Ovary (tissue), 10 donors: ENCODE measurements at regions of chr22 and their contacts with region 1.

Region 1: GRCh38 chr22:45577746-45578523 is 75.3 kb downstream of the FBLN1 start:
- DNase-seq: peak; percentile 71 to 89 (median 86)
- H3K4me3 ChIP-seq: no peak overlapping the region
- H3K27ac ChIP-seq: no peak overlapping the region
- H3K4me1 ChIP-seq: no peaks in the 10 kb centered on the region
- H3K27me3 ChIP-seq: no peaks in the 10 kb centered on the region
- CTCF ChIP-seq: peak; percentile 78 to 82 (median 80)
- EP300 ChIP-seq: no peak
- POLR2A ChIP-seq: no peak

Region 2: GRCh38 chr22:45553351-45554039 is 24.4 kb before region 1 on chr22:
- intact Hi-C with region 1: no loop called
- DNase-seq: peak; percentile 87 to 94 (median 91)
- H3K4me3 ChIP-seq: no peak overlapping the region
- H3K27ac ChIP-seq: peak overlapping the region; percentile 62 to 84
- H3K4me1 ChIP-seq: peaks cover 42% of the 10 kb centered on the region
- H3K27me3 ChIP-seq: no peaks in the 10 kb centered on the region
- CTCF ChIP-seq: peak; percentile 88 to 99 (median 97)
- EP300 ChIP-seq: no peak
- POLR2A ChIP-seq: peak; percentile 31

Region 3: GRCh38 chr22:45638834-45639746 is 61.2 kb after region 1 on chr22:
- intact Hi-C with region 1: loop called in 1 of 4 experiments (anchors 10 kb)
- DNase-seq: peak in 1 of 5 donors; percentile 40
- H3K4me3 ChIP-seq: no peak overlapping the region
- H3K27ac ChIP-seq: no peak overlapping the region
- H3K4me1 ChIP-seq: no peaks in the 10 kb centered on the region
- H3K27me3 ChIP-seq: no peaks in the 10 kb centered on the region
- CTCF ChIP-seq: no peak
- EP300 ChIP-seq: no peak
- POLR2A ChIP-seq: no peak

Region 4: DNA sequence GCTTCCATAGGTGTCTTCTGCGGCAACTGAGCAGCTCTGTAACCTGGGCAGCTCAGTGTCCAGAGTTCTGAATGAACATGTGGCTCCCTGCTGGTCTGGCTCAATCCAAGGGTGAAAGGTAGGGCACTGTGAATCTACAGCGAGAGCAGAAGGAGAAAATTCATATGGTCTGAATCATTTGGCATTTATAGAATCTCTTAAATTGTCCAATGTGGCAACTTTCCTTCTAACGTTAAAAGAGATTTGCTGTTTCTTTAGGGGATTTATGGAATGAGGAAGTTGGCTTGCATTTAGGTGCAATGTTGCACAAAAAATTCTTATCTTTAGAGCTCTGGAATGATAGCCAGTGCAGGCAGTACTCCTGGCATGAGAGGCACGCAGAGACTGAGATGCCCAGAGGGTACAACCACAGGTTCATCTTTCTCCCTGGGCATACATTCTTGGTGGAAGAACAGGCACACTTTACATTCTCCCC is 110.7 kb after region 1 on chr22:
- intact Hi-C with region 1: no loop called
- DNase-seq: no peak
- H3K4me3 ChIP-seq: no peak overlapping the region
- H3K27ac ChIP-seq: no peak overlapping the region
- H3K4me1 ChIP-seq: peaks cover 14% of the 10 kb centered on the region
- H3K27me3 ChIP-seq: no peaks in the 10 kb centered on the region
- CTCF ChIP-seq: no peak
- EP300 ChIP-seq: no peak
- POLR2A ChIP-seq: no peak

Region 5: DNA sequence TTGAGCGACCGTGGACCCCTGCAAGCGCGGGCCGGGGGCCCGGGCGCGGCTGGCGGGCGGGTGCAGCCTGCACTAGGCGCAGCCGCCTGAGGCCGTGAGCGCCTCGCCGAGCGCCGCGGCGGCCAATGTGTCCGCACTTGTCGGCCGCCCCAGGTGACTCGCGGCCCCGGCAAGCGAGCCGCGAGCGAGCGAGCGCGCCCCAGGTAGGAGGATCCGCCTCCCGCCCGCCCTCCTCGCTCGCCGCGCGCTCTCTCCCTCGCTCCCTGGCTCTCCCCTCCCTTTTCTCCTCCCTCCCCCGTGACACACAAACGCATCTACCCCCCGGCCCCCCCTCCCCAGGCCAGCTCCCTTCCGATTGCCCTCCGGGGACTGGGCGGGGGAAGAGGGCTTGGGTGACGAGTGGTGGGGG is 399.1 kb after region 1 on chr22 and contains the start of gene WNT7B:
- intact Hi-C with region 1: loop called in 1 of 4 experiments (anchors 2 kb)
- DNase-seq: no peak
- H3K4me3 ChIP-seq: no peak within 1 kb of the TSS
- H3K27ac ChIP-seq: no peak within 1 kb of the TSS
- H3K4me1 ChIP-seq: peaks cover 6% of the 10 kb centered on the region
- H3K27me3 ChIP-seq: no peaks in the 10 kb centered on the region
- CTCF ChIP-seq: no peak
- EP300 ChIP-seq: no peak
- POLR2A ChIP-seq: no peak
- total RNA-seq, gene WNT7B: 0.22 to 2.5 (median 0.59) TPM in 4 of 7 donors, not detected in the others